Dendritic cell treated with granulocyte-macrophage colony-stimulating factor and Interleukin-4, amounts not matched to agents 40 ng/mL and 50 ng/mL, for 4 days (primary cell): ENCODE measurements at regions of chr5 and their contacts with region 1.

Region 1: DNA sequence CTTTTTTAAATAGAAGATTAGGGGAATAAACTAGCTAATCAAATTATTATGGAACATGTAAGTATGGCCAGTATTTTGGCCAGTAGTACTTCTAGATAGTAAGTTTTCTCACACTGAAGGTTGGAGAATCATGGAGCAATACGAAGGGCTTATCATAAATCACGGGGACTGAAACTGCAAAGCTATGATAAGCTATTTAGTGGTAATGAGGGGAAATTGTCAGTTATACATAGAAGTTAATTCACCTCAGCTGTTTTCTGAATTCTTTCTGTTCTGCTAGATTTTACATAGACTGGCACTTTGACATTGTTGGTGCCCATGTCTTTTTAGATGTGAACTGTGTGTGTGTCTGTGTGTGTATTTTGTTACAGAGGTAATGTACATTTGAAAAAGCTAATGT is 34.5 kb upstream of the FAM151B start:
- H3K4me3 Mint-ChIP-seq: no peak overlapping the region
- H3K27ac Mint-ChIP-seq: no peak overlapping the region
- H3K4me1 Mint-ChIP-seq: no peaks in the 10 kb centered on the region
- H3K27me3 Mint-ChIP-seq: no peaks in the 10 kb centered on the region

Region 2: GRCh38 chr5:79653843-79654242 is 799.5 kb before region 1 on chr5:
- intact Hi-C with region 1: loop called (anchors 10 kb)
- H3K4me3 Mint-ChIP-seq: no peak overlapping the region
- H3K27ac Mint-ChIP-seq: no peak overlapping the region
- H3K4me1 Mint-ChIP-seq: no peaks in the 10 kb centered on the region
- H3K27me3 Mint-ChIP-seq: no peaks in the 10 kb centered on the region

Region 3: GRCh38 chr5:80414113-80414512 is 39.3 kb before region 1 on chr5:
- intact Hi-C with region 1: loop called (anchors 5 kb)
- H3K4me3 Mint-ChIP-seq: no peak overlapping the region
- H3K27ac Mint-ChIP-seq: no peak overlapping the region
- H3K4me1 Mint-ChIP-seq: peaks cover 63% of the 10 kb centered on the region
- H3K27me3 Mint-ChIP-seq: no peaks in the 10 kb centered on the region